HepG2 (cell line): ENCODE measurements at regions of chr22 and their contacts with region 1.

Region 1: GRCh38 chr22:20771918-20772625 is 1.8 kb upstream of the SERPIND1 start:
- DNase-seq: peak; percentile 70
- ATAC-seq: peak; percentile 85
- H3K4me3 ChIP-seq: peak overlapping the region in 1 of 3 experiments; percentile 36; a peak in 1 of 6 replicates
- H3K27ac ChIP-seq: peak overlapping the region; percentile 90
- H3K4me1 ChIP-seq: peaks cover 48% of the 10 kb centered on the region
- H3K27me3 ChIP-seq: no peaks in the 10 kb centered on the region; a peak in 1 of 5 replicates
- CTCF ChIP-seq: peak; percentile 85
- EP300 ChIP-seq: peak in 1 of 2 experiments; percentile 22; a peak in 1 of 4 replicates
- POLR2A ChIP-seq: no peak
- RAD21 ChIP-seq: peak; percentile 75

Region 2: GRCh38 chr22:20741634-20742581 is 30.2 kb before region 1 on chr22:
- CTCF ChIA-PET with region 1: interaction called, 5 read pairs
- POLR2A ChIA-PET with region 1: interaction called, 4 read pairs
- in situ Hi-C with region 1: no loop called
- intact Hi-C with region 1: loop called (anchors 1 kb)
- DNase-seq: peak; percentile 44
- ATAC-seq: peak; percentile 45
- H3K4me3 ChIP-seq: no peak overlapping the region
- H3K27ac ChIP-seq: no peak overlapping the region
- H3K4me1 ChIP-seq: no peaks in the 10 kb centered on the region
- H3K27me3 ChIP-seq: no peaks in the 10 kb centered on the region
- CTCF ChIP-seq: peak; percentile 71
- EP300 ChIP-seq: no peak
- POLR2A ChIP-seq: no peak
- RAD21 ChIP-seq: peak; percentile 38; the same call in 1 of the 2 replicates

Region 3: DNA sequence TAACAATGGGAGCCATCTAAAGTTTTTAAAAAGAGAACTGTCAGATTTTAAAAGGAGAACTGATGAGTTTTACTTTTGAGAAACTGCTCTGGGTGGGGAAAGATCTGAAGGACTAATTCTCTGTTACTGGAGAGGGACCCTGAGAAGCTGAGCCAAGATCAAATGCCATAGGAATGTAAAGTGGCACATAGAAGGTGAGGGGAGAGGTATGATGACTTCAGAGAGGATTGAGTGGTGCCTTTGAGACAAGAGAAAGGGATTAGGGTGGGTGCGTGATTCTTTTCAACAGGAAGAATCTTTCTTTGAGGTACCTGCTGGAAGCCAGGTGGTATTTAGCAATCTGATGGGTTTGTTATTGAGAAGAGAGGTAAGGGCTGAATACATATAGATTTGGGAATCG is 154.2 kb after region 1 on chr22:
- CTCF ChIA-PET with region 1: no interaction called
- POLR2A ChIA-PET with region 1: no interaction called
- in situ Hi-C with region 1: no loop called
- intact Hi-C with region 1: no loop called
- DNase-seq: no peak
- ATAC-seq: no peak
- H3K4me3 ChIP-seq: no peak overlapping the region
- H3K27ac ChIP-seq: no peak overlapping the region
- H3K4me1 ChIP-seq: peaks cover 85% of the 10 kb centered on the region
- H3K27me3 ChIP-seq: no peaks in the 10 kb centered on the region
- CTCF ChIP-seq: no peak
- EP300 ChIP-seq: no peak
- POLR2A ChIP-seq: no peak
- RAD21 ChIP-seq: no peak